CD8-positive, alpha-beta memory T cell (primary cell): ENCODE measurements at regions of chr7 and their contacts with region 1.

Region 1: GRCh38 chr7:35316549-35316948 is 62.6 kb upstream of the TBX20 start:
- DNase-seq: no peak
- H3K4me3 ChIP-seq: no peak overlapping the region
- H3K4me3 Mint-ChIP-seq: no peak overlapping the region
- H3K27ac ChIP-seq: no peak overlapping the region
- H3K27ac Mint-ChIP-seq: no peak overlapping the region
- H3K4me1 ChIP-seq: no peaks in the 10 kb centered on the region
- H3K4me1 Mint-ChIP-seq: no peaks in the 10 kb centered on the region
- H3K27me3 ChIP-seq: no peaks in the 10 kb centered on the region
- H3K27me3 Mint-ChIP-seq: peaks cover 3 to 12% of the 10 kb centered on the region in 2 donors

Region 2: DNA sequence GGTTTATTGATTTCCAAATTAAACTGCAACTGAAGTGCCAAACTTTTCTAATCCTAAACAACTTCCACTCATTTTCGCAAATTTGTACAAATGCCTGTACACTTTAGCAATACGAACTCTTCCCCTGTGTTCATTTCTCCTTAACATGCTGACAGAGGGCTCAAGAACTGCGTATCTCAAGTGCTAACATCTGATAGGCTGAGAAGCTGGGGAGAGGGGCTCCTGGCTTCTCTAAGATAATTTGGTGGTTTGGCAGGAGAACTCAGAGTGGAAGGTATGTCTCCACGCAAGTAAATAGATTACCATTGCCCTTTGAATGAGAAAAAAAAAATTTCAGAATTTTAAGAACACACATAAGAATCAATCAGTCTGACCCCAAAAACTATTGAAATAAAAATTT is 1019.8 kb after region 1 on chr7:
- CTCF ChIA-PET with region 1: no interaction called
- POLR2A ChIA-PET with region 1: interaction called, 13 read pairs
- DNase-seq: no peak
- H3K4me3 ChIP-seq: no peak overlapping the region
- H3K4me3 Mint-ChIP-seq: no peak overlapping the region
- H3K27ac ChIP-seq: no peak overlapping the region
- H3K27ac Mint-ChIP-seq: no peak overlapping the region
- H3K4me1 ChIP-seq: no peaks in the 10 kb centered on the region
- H3K4me1 Mint-ChIP-seq: no peaks in the 10 kb centered on the region
- H3K27me3 ChIP-seq: no peaks in the 10 kb centered on the region
- H3K27me3 Mint-ChIP-seq: peaks cover 2 to 7% of the 10 kb centered on the region in 2 donors